PC-3 (cell line): ENCODE measurements at regions of chr9 and their contacts with region 1.

Region 1: GRCh38 chr9:91604451-91605179 is 181.0 kb upstream of the NFIL3 start:
- DNase-seq: peak; percentile 68
- ATAC-seq: peak; percentile 95
- H3K4me3 ChIP-seq: no peak overlapping the region
- H3K27ac ChIP-seq: peak overlapping the region; percentile 66
- H3K4me1 ChIP-seq: peaks cover 15% of the 10 kb centered on the region
- H3K27me3 ChIP-seq: no peaks in the 10 kb centered on the region
- CTCF ChIP-seq: no peak

Region 2: DNA sequence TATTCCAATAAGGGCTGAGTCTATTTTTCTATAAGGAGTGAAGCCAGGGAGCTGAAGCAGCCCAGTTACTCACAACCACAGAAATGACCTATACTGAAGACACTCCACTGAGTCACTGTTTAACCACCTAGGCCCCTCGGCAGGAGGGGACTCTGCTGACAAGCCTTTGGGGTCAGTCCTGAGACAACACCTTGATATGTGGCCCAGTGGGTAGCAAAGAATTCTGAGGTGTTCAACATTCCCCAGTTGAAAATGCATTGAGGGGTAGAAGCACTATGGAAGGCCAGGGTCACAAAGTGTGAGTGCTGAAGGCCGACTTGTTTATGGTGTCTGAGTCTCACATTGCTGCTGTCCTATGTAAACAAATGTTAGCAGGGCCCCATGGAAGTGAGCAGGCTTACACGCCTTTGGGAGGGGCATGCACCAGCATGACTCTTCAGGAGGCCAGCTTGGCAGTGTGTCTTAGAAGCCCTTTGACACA is 68.4 kb before region 1 on chr9:
- CTCF ChIA-PET with region 1: no interaction called
- POLR2A ChIA-PET with region 1: no interaction called
- intact Hi-C with region 1: loop called (anchors 10 kb)
- DNase-seq: peak; percentile 90
- ATAC-seq: peak; percentile 95
- H3K4me3 ChIP-seq: peak overlapping the region; percentile 44; the same call in 1 of the 2 replicates
- H3K27ac ChIP-seq: peak overlapping the region; percentile 98
- H3K4me1 ChIP-seq: peaks cover 62% of the 10 kb centered on the region
- H3K27me3 ChIP-seq: no peaks in the 10 kb centered on the region
- CTCF ChIP-seq: no peak